ENCODE measurements at regions of chr22 and their contacts with region 1.

Region 1: GRCh38 chr22:17501679-17502285 is 61.5 kb upstream of the SLC25A18 start:
- DNase-seq: peak; percentile 69
- H3K4me3 ChIP-seq: no peak overlapping the region; a peak in 1 of 4 replicates
- H3K27ac ChIP-seq: no peak overlapping the region
- H3K4me1 ChIP-seq: no peaks in the 10 kb centered on the region
- H3K27me3 ChIP-seq: peaks cover 61% of the 10 kb centered on the region
- CTCF ChIP-seq: peak; percentile 79
- EP300 ChIP-seq: no peak
- RAD21 ChIP-seq: peak; percentile 87

Region 2: DNA sequence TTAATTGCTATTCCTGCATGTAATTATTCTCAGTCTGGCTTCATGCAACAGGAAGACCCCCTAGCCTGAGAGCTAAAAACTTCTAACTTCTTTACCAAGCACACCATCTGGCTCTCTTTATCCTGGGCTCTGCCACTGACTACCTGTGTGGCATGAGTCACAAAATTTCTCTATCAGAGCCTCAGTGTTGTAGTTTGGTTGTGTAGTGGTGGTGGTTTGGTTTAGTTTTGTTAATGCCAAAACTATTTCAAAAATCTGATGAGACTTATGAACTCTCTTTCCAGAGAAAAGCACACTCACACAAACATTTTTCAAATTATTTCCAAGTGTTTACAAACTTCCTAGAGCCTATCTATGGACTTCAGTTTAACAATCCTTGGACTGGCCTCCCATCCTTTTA is 424.5 kb before region 1 on chr22:
- CTCF ChIA-PET with region 1: interaction called, 90 read pairs
- POLR2A ChIA-PET with region 1: no interaction called
- DNase-seq: no peak
- H3K4me3 ChIP-seq: no peak overlapping the region
- H3K27ac ChIP-seq: peak overlapping the region in 1 of 2 experiments; percentile 45; a peak in 1 of 4 replicates
- H3K4me1 ChIP-seq: no peaks in the 10 kb centered on the region
- H3K27me3 ChIP-seq: peaks cover 5% of the 10 kb centered on the region
- CTCF ChIP-seq: no peak
- EP300 ChIP-seq: peak in 1 of 2 experiments; percentile 20; a peak in 1 of 4 replicates
- RAD21 ChIP-seq: no peak

Region 3: GRCh38 chr22:17475318-17476212 is 26.2 kb before region 1 on chr22:
- CTCF ChIA-PET with region 1: interaction called, 10 read pairs
- POLR2A ChIA-PET with region 1: no interaction called
- DNase-seq: no peak
- H3K4me3 ChIP-seq: no peak overlapping the region
- H3K27ac ChIP-seq: no peak overlapping the region
- H3K4me1 ChIP-seq: no peaks in the 10 kb centered on the region
- H3K27me3 ChIP-seq: peaks cover 70% of the 10 kb centered on the region
- CTCF ChIP-seq: no peak
- EP300 ChIP-seq: no peak
- RAD21 ChIP-seq: no peak

Region 4: GRCh38 chr22:17514084-17514483 is 12.3 kb after region 1 on chr22:
- CTCF ChIA-PET with region 1: interaction called, 10 read pairs
- POLR2A ChIA-PET with region 1: no interaction called
- DNase-seq: no peak
- H3K4me3 ChIP-seq: no peak overlapping the region
- H3K27ac ChIP-seq: no peak overlapping the region
- H3K4me1 ChIP-seq: no peaks in the 10 kb centered on the region
- H3K27me3 ChIP-seq: peaks cover 86% of the 10 kb centered on the region
- CTCF ChIP-seq: no peak
- EP300 ChIP-seq: no peak
- RAD21 ChIP-seq: no peak

Region 5: GRCh38 chr22:17523925-17524324 is 22.1 kb after region 1 on chr22:
- CTCF ChIA-PET with region 1: interaction called, 12 read pairs
- POLR2A ChIA-PET with region 1: no interaction called
- DNase-seq: no peak
- H3K4me3 ChIP-seq: no peak overlapping the region
- H3K27ac ChIP-seq: no peak overlapping the region
- H3K4me1 ChIP-seq: peaks cover 0 to 2% of the 10 kb centered on the region in 2 experiments; a peak in 1 of 4 replicates
- H3K27me3 ChIP-seq: peaks cover 28% of the 10 kb centered on the region; the same call in 1 of the 2 replicates
- CTCF ChIP-seq: no peak
- EP300 ChIP-seq: no peak
- RAD21 ChIP-seq: no peak